Adrenal gland (tissue), 19 donors: ENCODE measurements at regions of chr3 and their contacts with region 1.

Region 1: DNA sequence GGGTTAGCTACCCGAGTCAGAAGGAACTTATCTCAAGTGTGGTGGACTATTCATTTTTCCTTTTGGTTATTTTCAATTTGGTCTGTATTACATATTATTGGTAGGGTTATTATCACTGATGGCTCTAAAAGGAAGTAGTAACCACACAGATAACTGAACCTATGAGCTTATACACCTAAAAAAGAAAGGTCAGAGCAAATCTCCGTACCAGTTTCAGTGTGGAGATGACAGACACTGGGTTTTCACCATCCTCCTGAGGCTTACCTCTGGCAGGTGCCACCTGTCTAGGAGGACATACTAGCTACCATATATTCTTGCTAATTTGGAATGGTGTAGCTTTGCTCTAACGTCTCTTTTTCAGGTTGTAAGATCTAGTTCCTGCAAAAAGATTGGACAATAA is 10.2 kb downstream of the GAP43 start:
- DNase-seq: no peak
- H3K4me3 ChIP-seq: no peak overlapping the region
- H3K27ac ChIP-seq: no peak overlapping the region
- H3K4me1 ChIP-seq: no peaks in the 10 kb centered on the region
- H3K27me3 ChIP-seq: peaks cover 10% of the 10 kb centered on the region
- CTCF ChIP-seq: no peak
- POLR2A ChIP-seq: no peak

Region 2: GRCh38 chr3:115804722-115805121 is 171.3 kb after region 1 on chr3:
- intact Hi-C with region 1: loop called in 1 of 2 experiments (anchors 5 kb)
- DNase-seq: no peak
- H3K4me3 ChIP-seq: no peak overlapping the region
- H3K27ac ChIP-seq: peak overlapping the region in 1 of 5 donors; percentile 35
- H3K4me1 ChIP-seq: no peaks in the 10 kb centered on the region
- H3K27me3 ChIP-seq: no peaks in the 10 kb centered on the region
- CTCF ChIP-seq: no peak
- POLR2A ChIP-seq: no peak